AG04450 (cell line): ENCODE measurements at regions of chr19 and their contacts with region 1.

Region 1: DNA sequence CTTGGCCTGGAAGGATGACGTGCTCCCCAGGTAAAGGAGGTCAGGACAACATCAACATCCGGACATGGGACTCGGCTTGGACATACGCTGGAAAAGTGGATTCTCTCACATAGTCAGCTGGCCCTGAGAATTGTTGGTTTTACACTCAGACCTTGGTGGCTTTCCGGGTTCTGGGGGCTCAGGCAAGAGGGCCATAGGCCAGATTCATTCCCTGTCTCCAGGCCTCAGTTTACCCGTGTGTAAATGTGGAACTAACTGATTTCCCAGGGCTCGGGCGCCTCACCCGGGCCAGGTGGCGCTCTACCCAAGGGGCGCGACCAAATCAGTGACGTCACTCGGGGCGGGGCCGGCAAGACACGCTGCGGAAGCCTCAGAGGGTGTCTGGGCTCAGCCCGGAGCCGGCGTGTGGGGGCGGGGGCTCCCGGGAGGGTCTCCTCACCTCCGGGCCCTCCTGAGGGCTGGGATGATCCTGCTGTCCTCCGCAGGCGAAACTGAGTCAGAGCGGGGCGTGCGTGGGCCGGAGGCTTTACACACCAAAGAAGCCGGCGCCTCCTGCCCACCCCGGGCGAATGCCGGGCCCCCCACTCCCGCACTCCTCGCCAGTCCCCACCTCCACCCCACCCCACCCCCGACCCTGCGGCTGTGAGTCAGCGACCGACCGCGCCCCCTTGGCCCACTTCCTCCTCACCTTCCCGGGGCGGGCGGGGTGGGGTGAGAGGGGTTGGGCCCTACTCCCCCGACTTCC is 861 bp upstream of the VASP start:
- DNase-seq: peak; percentile 66
- H3K4me3 ChIP-seq: peak overlapping the region; percentile 95
- H3K27ac ChIP-seq: peak overlapping the region; percentile 87
- H3K27me3 ChIP-seq: no peaks in the 10 kb centered on the region
- CTCF ChIP-seq: peak; percentile 56

Region 2: GRCh38 chr19:45526143-45526542 is 19.7 kb after region 1 on chr19:
- CTCF ChIA-PET with region 1: no interaction called
- POLR2A ChIA-PET with region 1: interaction called, 10 read pairs
- DNase-seq: no peak
- H3K4me3 ChIP-seq: no peak overlapping the region
- H3K27ac ChIP-seq: no peak overlapping the region
- H3K27me3 ChIP-seq: no peaks in the 10 kb centered on the region
- CTCF ChIP-seq: no peak

Region 3: DNA sequence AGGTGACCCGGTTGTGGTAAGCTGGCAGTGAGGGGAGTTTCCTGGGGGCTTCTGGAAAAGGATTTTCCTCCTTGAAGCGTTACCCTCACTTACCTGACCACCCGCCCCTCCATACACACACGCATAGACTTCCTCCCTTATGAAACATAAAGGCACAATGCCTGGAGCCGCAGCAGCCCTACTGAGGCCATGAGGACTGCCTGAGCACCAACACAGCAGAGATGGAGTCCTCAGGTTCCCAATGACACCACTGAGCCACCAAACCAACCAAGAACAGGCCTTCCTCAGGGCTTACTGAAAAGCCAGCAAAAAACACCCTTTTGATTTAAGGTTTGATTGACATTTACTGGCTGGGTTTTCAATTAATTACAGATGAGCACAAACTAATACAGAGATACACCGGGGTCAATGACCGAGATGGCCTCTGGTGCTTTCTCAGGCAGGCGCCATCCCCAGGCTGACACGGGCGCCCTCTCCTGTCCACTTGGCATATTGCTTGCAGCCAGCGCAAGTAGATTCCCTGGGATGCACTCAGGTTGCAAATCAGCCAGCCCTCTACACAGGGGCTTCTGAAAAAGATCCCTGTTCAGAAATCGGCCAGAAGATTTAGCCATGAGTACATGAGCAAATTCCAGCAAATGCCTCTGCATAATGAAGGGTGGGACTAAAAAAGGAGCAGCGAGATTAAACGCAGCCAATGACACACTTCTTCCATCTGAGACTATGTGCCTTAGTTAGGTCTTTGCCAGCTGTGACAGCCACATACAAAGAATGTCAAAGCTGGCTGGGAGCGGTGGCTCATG is 63.4 kb after region 1 on chr19:
- CTCF ChIA-PET with region 1: no interaction called
- POLR2A ChIA-PET with region 1: no interaction called
- DNase-seq: no peak
- H3K4me3 ChIP-seq: no peak overlapping the region
- H3K27ac ChIP-seq: no peak overlapping the region
- H3K27me3 ChIP-seq: no peaks in the 10 kb centered on the region
- CTCF ChIP-seq: peak; percentile 78